ENCODE measurements at regions of chr11 and their contacts with region 1.

Region 1: GRCh38 chr11:10592331-10592730 is 23.9 kb upstream of the LYVE1 start:
- DNase-seq: peak; percentile 91
- H3K4me3 ChIP-seq: no peak overlapping the region
- H3K27ac ChIP-seq: peak overlapping the region; percentile 97
- H3K4me1 ChIP-seq: peaks cover 45% of the 10 kb centered on the region
- H3K27me3 ChIP-seq: no peaks in the 10 kb centered on the region
- CTCF ChIP-seq: no peak

Region 2: GRCh38 chr11:10540923-10541560 is 51.3 kb before region 1 on chr11 and contains the start of gene RNF141:
- CTCF ChIA-PET with region 1: interaction called, 3 read pairs
- dilution Hi-C with region 1: no loop called
- in situ Hi-C with region 1: no loop called
- intact Hi-C with region 1: loop called (anchors 1 kb)
- DNase-seq: peak; percentile 91
- H3K4me3 ChIP-seq: peak within 1 kb of the TSS; percentile 64 to 89 (median 72)
- H3K27ac ChIP-seq: peak within 1 kb of the TSS; percentile 85
- H3K4me1 ChIP-seq: peaks cover 9% of the 10 kb centered on the region
- H3K27me3 ChIP-seq: no peaks in the 10 kb centered on the region
- CTCF ChIP-seq: peak; percentile 69 to 91
- total RNA-seq, gene RNF141: 45.7 to 58.2 TPM

Region 3: GRCh38 chr11:10770626-10771254 is 178.4 kb after region 1 on chr11:
- CTCF ChIA-PET with region 1: no interaction called
- dilution Hi-C with region 1: no loop called
- in situ Hi-C with region 1: no loop called
- intact Hi-C with region 1: no loop called
- DNase-seq: peak; percentile 20
- H3K4me3 ChIP-seq: no peak overlapping the region
- H3K27ac ChIP-seq: no peak overlapping the region
- H3K4me1 ChIP-seq: no peaks in the 10 kb centered on the region
- H3K27me3 ChIP-seq: no peaks in the 10 kb centered on the region
- CTCF ChIP-seq: peak; percentile 78 to 79

Region 4: GRCh38 chr11:10943968-10944367 is 351.6 kb after region 1 on chr11:
- CTCF ChIA-PET with region 1: no interaction called
- dilution Hi-C with region 1: no loop called
- in situ Hi-C with region 1: no loop called
- intact Hi-C with region 1: no loop called
- DNase-seq: no peak
- H3K4me3 ChIP-seq: no peak overlapping the region
- H3K27ac ChIP-seq: no peak overlapping the region
- H3K4me1 ChIP-seq: no peaks in the 10 kb centered on the region
- H3K27me3 ChIP-seq: no peaks in the 10 kb centered on the region
- CTCF ChIP-seq: no peak

Measured in mammary epithelial cell (primary cell).